Gastrocnemius medialis (tissue), 4 donors: ENCODE measurements at regions of chr15 and their contacts with region 1.

Region 1: GRCh38 chr15:93210995-93211394 is 122.0 kb upstream of the RGMA start:
- DNase-seq: peak; percentile 64 to 85
- ATAC-seq: peak; percentile 50 to 66
- H3K4me3 ChIP-seq: no peak overlapping the region
- H3K27ac ChIP-seq: peak overlapping the region; percentile 76 to 90 (median 86)
- H3K4me1 ChIP-seq: peaks cover 18 to 45% of the 10 kb centered on the region in 2 donors
- H3K27me3 ChIP-seq: no peaks in the 10 kb centered on the region
- CTCF ChIP-seq: no peak
- POLR2A ChIP-seq: no peak

Region 2: DNA sequence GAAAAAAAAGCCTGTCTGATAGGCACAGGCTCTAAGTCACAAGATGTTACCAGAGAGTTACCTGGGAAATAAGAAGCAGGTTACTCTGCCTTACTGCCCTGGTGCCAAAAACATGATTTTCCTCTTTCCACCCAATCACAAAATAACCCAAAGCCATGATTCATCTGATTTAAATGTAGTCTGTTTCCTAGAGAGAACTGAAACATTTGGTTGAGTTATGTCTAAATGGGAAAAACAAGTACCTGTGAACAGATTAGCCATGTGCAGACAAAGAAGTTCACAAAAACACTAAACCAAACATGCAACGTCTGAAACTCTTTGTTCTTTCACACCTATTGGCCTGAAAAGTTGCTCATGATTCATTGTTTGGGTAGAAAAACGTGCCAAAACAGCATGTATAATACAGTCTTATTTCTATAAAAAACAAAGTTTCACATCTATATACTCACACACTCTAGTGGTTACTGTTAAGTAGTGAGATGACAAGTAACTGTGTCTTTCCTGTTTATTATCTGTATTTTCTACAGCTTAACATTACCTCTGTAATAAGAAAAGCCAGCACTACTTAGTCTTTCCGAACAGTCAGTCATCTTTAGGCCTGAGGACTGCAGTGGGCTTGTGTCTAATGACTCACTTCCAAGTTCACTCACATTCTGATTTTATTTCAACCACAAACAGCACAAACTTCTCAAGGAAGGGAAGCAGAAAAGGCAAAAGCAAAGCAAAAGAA is 585.6 kb before region 1 on chr15:
- in situ Hi-C with region 1: no loop called
- intact Hi-C with region 1: loop called (anchors 2 kb)
- DNase-seq: no peak
- ATAC-seq: no peak
- H3K4me3 ChIP-seq: no peak overlapping the region
- H3K27ac ChIP-seq: peak overlapping the region; percentile 84 to 92 (median 90)
- H3K4me1 ChIP-seq: peaks cover 20 to 28% of the 10 kb centered on the region in 2 donors
- H3K27me3 ChIP-seq: no peaks in the 10 kb centered on the region
- CTCF ChIP-seq: no peak
- POLR2A ChIP-seq: no peak

Region 3: GRCh38 chr15:93109336-93110102 is 101.5 kb before region 1 on chr15:
- in situ Hi-C with region 1: no loop called
- intact Hi-C with region 1: no loop called
- DNase-seq: no peak
- ATAC-seq: no peak
- H3K4me3 ChIP-seq: no peak overlapping the region
- H3K27ac ChIP-seq: no peak overlapping the region
- H3K4me1 ChIP-seq: peaks cover 0 to under 1% of the 10 kb centered on the region in 2 donors
- H3K27me3 ChIP-seq: no peaks in the 10 kb centered on the region
- CTCF ChIP-seq: no peak
- POLR2A ChIP-seq: no peak

Region 4: GRCh38 chr15:93467327-93467726 is 256.3 kb after region 1 on chr15:
- in situ Hi-C with region 1: no loop called
- intact Hi-C with region 1: loop called (anchors 5 kb)
- DNase-seq: peak; percentile 96 to 98
- ATAC-seq: peak; percentile 99 to 100
- H3K4me3 ChIP-seq: no peak overlapping the region
- H3K27ac ChIP-seq: peak overlapping the region; percentile 47 to 72 (median 70)
- H3K4me1 ChIP-seq: peaks cover 11 to 22% of the 10 kb centered on the region in 2 donors
- H3K27me3 ChIP-seq: no peaks in the 10 kb centered on the region
- CTCF ChIP-seq: peak in 1 of 5 experiments; percentile 17
- POLR2A ChIP-seq: no peak

Region 5: DNA sequence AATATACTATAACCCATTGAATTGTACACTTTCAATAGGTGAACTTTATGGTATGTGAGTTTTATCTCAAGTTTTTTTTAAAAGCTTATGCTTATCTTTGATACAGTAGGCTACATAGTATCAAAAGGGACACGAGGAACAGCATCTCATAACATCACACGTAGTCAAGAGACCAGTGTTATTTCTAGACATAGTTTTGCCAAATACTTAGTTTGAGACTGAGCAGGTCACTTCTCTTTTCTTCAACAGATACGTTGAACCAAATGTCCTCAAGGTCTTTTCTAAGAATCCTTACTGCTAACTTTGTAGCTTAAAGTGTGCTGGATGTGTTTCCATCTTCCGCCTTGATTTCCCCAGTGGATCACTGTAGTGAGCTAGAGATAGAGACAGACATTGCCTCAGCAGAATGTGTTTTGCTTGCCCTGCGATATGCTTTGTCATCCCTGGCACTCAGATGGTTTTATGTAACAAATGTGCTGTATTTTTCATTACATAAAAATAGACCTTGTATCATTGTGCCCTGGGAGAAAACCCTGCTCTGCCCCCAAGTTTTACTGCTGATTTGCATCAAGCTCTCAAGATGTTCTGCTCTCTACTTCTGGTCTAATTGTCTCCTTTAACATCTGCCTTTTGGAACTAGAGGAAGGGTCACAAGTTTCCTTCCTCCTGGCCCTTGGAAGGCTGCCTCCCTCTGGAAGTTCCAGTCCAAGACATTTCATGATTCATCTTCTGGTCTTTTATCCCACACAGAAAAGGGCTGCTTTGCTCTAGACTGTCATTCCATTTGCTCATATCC is 304.5 kb after region 1 on chr15:
- in situ Hi-C with region 1: no loop called
- intact Hi-C with region 1: loop called (anchors 5 kb)
- DNase-seq: peak; percentile 55 to 62
- ATAC-seq: peak; percentile 89 to 94
- H3K4me3 ChIP-seq: no peak overlapping the region
- H3K27ac ChIP-seq: peak overlapping the region; percentile 59 to 86 (median 77)
- H3K4me1 ChIP-seq: peaks cover 29 to 36% of the 10 kb centered on the region in 2 donors
- H3K27me3 ChIP-seq: no peaks in the 10 kb centered on the region
- CTCF ChIP-seq: peak in 1 of 5 experiments; percentile 13
- POLR2A ChIP-seq: no peak